AG04449 (cell line): ENCODE measurements at regions of chr2 and their contacts with region 1.

Region 1: GRCh38 chr2:68121873-68122679 is 35.6 kb upstream of the PNO1 start:
- DNase-seq: peak; percentile 23
- H3K4me3 ChIP-seq: no peak overlapping the region
- CTCF ChIP-seq: peak; percentile 98

Region 2: GRCh38 chr2:68134554-68134953 is 12.5 kb after region 1 on chr2:
- CTCF ChIA-PET with region 1: interaction called, 34 read pairs
- POLR2A ChIA-PET with region 1: no interaction called
- DNase-seq: no peak
- H3K4me3 ChIP-seq: no peak overlapping the region
- CTCF ChIP-seq: no peak

Region 3: DNA sequence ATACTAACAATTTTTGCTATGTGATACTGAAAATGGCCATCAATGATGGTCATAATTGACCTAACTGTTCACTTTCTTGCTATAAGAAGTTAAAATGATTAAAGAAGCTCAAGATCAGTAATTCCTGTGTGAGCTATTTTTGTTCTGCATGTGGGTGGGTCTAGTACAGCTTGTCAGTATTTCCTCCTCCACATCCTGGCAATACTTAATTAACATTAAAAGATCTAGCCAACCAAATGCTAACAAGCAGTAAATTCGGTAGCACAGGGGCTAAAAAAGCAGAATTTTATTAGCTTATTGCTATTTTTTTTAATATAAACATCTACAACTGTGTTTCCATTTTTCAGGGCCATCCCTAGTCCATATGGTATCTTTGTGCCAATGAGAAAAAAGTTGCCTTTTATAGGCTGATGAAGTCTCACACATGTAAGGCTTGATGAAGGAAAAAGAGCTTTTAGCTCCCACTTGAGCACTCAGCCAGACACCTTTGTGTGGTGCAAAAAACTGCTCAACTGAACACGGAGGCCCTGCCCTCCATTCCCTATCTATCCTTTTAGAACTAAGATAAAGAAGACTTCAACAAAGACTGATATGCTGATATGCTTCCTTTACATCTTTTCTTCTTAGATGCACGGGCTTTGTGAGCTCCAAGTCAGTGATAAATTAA is 30.7 kb after region 1 on chr2:
- CTCF ChIA-PET with region 1: interaction called, 11 read pairs
- POLR2A ChIA-PET with region 1: no interaction called
- DNase-seq: no peak
- H3K4me3 ChIP-seq: no peak overlapping the region
- CTCF ChIP-seq: no peak

Region 4: GRCh38 chr2:68282811-68283418 is 160.8 kb after region 1 on chr2:
- CTCF ChIA-PET with region 1: interaction called, 126 read pairs
- POLR2A ChIA-PET with region 1: interaction called, 3 read pairs
- DNase-seq: no peak
- H3K4me3 ChIP-seq: no peak overlapping the region
- CTCF ChIP-seq: peak; percentile 54

Region 5: DNA sequence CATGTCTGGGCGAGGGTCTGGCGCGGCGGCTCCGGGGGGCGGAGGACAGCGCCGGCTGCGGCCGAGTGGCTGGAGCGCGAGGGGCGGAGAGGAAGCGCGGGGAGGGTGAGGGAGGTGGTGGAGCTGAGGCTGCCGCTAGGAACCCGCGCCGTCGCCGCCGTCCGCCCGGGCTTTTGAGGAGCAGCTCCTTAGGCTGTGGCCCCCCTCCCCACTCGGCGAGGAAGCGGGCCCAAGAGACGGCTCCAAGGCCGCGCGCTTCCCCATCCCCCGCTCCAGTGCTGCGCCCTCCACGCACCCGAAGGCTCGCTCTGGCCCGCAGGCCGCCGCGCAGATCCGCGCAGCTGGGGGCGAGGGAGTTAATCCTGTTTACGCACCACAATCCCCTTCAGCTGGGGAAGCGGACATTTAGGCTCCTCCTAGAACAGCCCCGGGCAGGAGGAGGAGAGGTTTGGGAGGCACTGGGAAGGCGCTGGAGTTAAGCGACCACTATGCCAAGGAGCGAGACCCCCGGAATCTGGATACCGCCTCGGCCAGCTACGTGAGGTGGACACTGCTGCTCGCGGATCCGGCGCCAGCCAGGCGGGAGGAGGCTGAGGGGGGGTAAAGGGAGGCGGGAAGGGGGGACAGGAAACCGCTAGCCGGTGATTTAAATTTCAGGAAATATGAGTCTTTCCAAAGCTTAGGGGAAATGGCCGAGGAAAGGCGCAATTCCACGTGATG is 197.5 kb after region 1 on chr2 and contains the start of gene CNRIP1:
- CTCF ChIA-PET with region 1: interaction called, 10 read pairs
- POLR2A ChIA-PET with region 1: no interaction called
- DNase-seq: no peak
- H3K4me3 ChIP-seq: peak within 1 kb of the TSS; percentile 81
- CTCF ChIP-seq: peak; percentile 6

Region 6: DNA sequence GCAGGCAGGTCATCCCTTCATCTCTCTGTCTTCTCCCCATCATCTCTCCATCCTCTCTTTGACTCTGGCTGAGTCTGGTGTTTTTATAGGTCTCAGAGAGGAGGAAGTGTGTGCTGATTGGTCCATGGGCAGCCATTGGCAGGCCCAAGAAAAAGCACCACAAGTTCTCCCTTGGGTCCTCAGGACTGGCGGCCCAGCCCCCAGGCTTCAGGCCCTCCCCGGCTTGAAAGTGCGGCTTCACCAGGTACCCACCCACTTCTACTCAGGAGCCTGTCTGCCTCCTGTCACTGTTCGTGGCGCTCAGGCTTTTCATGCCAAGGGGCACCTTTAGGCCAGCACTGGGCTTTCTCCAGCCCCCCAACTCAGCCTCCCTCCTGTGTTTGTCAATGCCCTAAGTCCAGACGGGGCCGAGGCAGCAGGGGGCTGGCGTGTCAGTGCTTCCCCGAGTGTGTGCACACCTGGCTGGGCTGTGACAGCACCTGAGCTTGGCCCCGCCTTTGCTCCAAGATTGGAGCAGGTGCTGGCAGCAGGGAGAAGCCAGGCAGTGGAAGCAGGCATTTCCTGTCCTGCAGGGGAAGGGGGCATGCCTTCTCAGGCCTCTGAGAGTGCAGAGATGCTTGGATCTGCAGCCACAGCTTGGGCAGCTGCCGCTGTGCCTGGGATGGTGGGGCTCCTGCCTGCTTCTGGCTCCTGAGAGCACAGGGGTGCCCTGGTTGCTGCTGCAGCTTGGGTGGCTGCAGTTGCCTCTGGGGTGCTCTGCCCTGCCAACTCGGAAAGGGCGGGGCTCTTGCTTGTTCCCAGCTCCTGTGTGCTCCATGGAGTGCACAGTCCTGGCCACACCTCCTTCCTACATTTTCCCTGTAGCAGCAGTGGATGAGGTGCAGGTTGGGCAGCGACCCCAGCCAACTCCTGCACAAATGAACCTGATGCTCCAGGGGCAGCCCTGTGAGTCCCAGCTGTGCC is 310.9 kb after region 1 on chr2:
- CTCF ChIA-PET with region 1: interaction called, 113 read pairs
- POLR2A ChIA-PET with region 1: no interaction called
- DNase-seq: no peak
- H3K4me3 ChIP-seq: no peak overlapping the region
- CTCF ChIP-seq: no peak